Activated CD8-positive, alpha-beta T cell treated with anti-CD3 and anti-CD28 coated beads, Interleukin-2, amount 10 ng/mL, durations not matched to agents 7 days and 5 days (primary cell): ENCODE measurements at regions of chr6 and their contacts with region 1.

Region 1: GRCh38 chr6:53359072-53359842 is 10.5 kb upstream of the ELOVL5 start:
- DNase-seq: peak; percentile 92
- ATAC-seq: peak; percentile 96
- H3K4me3 Mint-ChIP-seq: peak overlapping the region; percentile 87
- H3K27ac Mint-ChIP-seq: peak overlapping the region; percentile 98
- H3K4me1 Mint-ChIP-seq: peaks cover 47% of the 10 kb centered on the region
- H3K27me3 Mint-ChIP-seq: peaks cover 6% of the 10 kb centered on the region

Region 2: DNA sequence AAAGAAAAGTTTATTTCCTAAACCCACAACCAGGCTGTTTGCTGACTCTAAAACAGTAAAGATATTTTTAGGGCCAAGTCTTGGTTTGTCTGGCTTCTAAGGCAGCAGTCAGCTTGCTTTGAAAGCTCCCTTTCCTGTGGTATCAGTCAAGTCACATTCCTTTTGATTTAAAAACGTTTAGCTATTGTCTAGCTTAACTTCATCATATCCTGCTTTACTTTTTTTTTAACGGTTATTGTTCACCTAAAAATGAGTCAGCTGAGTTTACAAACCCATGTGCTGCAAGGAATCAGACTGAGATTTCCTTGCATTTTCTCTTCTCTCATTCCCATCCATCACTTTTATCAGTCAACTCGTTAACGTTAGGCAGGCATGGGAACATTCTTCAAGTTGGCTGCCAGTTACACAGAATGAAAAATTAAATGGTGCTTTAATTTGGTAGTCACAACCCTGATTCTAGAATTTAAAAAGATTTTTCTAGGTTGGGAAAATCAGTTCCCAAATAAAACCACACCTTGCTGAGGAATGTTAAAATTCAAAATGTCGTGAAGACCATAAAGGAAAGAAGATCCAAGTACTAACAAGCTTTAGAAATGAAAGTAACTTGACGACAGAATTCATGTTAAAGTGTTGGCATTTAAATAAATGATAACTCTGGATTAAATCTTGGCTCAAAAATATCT is 56.4 kb before region 1 on chr6:
- CTCF ChIA-PET with region 1: interaction called, 3 read pairs
- POLR2A ChIA-PET with region 1: interaction called, 11 read pairs
- DNase-seq: peak; percentile 35
- ATAC-seq: peak; percentile 68
- H3K4me3 Mint-ChIP-seq: peak overlapping the region; percentile 67
- H3K27ac Mint-ChIP-seq: peak overlapping the region; percentile 77
- H3K4me1 Mint-ChIP-seq: peaks cover 72% of the 10 kb centered on the region
- H3K27me3 Mint-ChIP-seq: no peaks in the 10 kb centered on the region